Activated T-helper 2 cell treated with anti-CD3 and anti-CD28 coated beads, Interferon-gamma antibody, Interleukin-2, Interleukin-4, amounts not matched to agents 10 μg/mL and 5 μg/mL and 100 μg/mL, durations not matched to agents 14 hours and 24 hours and 36 hours (primary cell): ENCODE measurements at regions of chr10 and their contacts with region 1.

Region 1: GRCh38 chr10:60434418-60435046 is 44.9 kb upstream of the ANK3 start:
- DNase-seq: no peak
- H3K4me3 Mint-ChIP-seq: no peak overlapping the region
- H3K27ac Mint-ChIP-seq: no peak overlapping the region
- H3K4me1 Mint-ChIP-seq: no peaks in the 10 kb centered on the region
- H3K27me3 Mint-ChIP-seq: no peaks in the 10 kb centered on the region

Region 2: DNA sequence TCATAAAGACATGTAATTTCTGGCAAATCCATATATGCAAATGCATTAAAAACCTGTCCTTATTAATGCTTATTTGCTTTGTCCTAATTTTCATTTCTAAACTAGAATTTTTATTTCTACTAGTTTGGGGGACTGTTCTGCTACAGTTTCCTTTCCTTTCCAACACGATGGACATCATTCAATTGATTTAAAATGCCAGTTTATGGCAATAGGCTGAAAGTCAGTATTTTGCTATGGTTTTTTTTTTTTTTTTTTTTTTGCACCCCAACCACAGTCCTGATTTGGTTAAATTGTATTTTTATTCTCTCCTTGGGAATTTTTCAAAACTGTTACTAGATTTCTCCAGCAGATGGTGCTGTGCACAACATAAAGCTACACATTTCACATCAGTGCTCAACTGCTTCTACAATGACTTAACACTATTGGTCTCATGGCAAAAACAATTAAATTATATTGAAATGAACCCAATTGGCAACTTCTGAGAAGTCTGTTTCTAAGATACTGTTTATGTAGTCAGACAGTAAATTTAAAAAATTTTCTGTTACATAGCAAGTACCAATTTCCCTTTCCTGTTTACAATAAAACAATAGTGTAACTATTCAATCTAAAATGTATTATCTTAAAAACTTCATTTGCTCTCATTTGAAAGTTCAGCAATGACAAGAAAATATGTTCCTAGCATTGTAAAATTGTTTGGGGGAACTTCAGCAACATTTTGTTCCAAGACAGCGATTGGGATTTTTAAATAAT is 334.4 kb before region 1 on chr10:
- intact Hi-C with region 1: loop called (anchors 2 kb)
- DNase-seq: no peak
- H3K4me3 Mint-ChIP-seq: no peak overlapping the region
- H3K27ac Mint-ChIP-seq: no peak overlapping the region
- H3K4me1 Mint-ChIP-seq: no peaks in the 10 kb centered on the region
- H3K27me3 Mint-ChIP-seq: no peaks in the 10 kb centered on the region

Region 3: DNA sequence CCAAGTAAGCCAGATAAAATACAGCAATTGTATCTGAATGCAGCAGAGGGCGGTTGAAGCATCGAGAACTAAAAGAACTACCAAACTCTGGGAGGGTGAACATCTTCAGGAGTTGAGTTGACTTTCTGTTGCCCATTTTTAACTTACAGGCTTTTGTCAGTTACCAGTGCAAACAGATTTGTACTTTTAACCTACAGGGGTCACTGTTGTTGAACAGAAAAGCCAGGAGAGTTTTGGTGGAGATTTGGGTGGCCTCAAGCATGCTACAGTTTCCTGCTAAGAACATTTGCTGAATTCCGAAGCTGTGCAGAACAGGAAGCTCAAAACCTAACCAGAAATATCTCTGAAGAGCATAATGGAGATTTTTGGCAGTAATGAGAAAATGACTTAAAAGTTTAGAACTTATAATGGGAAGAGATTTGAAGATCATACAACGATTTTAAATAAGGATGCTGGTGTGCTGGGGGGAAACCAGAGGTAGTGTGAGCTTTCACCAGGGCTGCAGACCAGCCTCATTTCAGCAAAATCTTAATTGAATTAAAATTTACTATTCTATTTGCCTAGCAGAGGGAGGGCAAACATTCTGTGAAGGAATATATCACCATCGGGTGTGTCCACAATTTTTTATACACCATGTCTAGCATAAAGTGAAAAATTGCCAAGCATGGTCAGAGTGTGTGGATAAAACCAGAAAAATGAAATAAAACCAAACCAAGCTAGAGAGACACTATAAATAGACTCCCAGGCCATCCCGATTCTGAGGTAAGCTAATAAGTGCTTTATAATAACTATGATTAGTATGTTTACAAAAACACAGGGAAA is 319.6 kb before region 1 on chr10:
- intact Hi-C with region 1: loop called (anchors 1 kb)
- DNase-seq: no peak
- H3K4me3 Mint-ChIP-seq: no peak overlapping the region
- H3K27ac Mint-ChIP-seq: no peak overlapping the region
- H3K4me1 Mint-ChIP-seq: no peaks in the 10 kb centered on the region
- H3K27me3 Mint-ChIP-seq: no peaks in the 10 kb centered on the region

Region 4: DNA sequence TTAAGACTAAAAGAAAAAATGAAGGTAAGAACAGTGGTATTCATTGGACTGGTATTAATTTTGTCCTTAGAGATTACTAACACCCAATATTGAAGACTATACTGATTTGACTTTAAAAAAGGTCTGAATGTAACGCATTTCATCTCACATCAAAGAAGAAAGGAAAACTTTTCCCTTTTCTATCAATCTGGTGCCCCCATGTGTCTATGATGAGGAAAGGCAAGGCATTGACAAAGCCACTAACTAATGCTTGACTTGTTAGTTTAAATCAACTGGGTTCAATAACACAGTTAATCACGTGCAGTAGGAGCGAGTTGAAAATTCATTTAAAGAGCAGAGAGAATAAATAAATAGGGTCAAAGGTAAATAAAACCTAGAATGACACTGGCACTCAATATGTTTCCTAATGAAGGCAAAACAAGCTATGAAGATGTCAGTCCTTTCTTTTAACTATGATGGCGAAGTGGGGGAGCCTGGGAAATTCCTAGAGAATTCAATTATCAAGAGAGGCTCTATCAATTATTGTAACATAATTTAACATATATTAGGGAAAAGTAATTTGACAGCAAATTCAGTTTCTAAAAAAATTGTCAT is 225.8 kb before region 1 on chr10:
- intact Hi-C with region 1: loop called (anchors 1 kb)
- DNase-seq: no peak
- H3K4me3 Mint-ChIP-seq: no peak overlapping the region
- H3K27ac Mint-ChIP-seq: no peak overlapping the region
- H3K4me1 Mint-ChIP-seq: peaks cover 19% of the 10 kb centered on the region
- H3K27me3 Mint-ChIP-seq: no peaks in the 10 kb centered on the region

Region 5: GRCh38 chr10:60414805-60415585 is 19.5 kb before region 1 on chr10:
- intact Hi-C with region 1: no loop called
- DNase-seq: no peak
- H3K4me3 Mint-ChIP-seq: no peak overlapping the region
- H3K27ac Mint-ChIP-seq: no peak overlapping the region
- H3K4me1 Mint-ChIP-seq: peaks cover 13% of the 10 kb centered on the region
- H3K27me3 Mint-ChIP-seq: no peaks in the 10 kb centered on the region